Motor neuron (in vitro differentiated cells): ENCODE measurements at regions of chr3 and their contacts with region 1.

Region 1: GRCh38 chr3:27712136-27713077 is 9.7 kb downstream of the EOMES start:
- ATAC-seq: peak; percentile 86 to 97 (median 95)
- H3K4me3 ChIP-seq: peak overlapping the region; percentile 9 to 31 (median 18)
- H3K27ac ChIP-seq: no peak overlapping the region
- H3K4me1 ChIP-seq: peaks cover 16 to 22% of the 10 kb centered on the region in 2 donors

Region 2: GRCh38 chr3:27431116-27431515 is 281.3 kb before region 1 on chr3:
- in situ Hi-C with region 1: no loop called
- ATAC-seq: peak in 4 of 8 experiments; percentile 53 to 100 (median 100)
- H3K4me3 ChIP-seq: no peak overlapping the region
- H3K27ac ChIP-seq: no peak overlapping the region
- H3K4me1 ChIP-seq: no peaks in the 10 kb centered on the region

Region 3: GRCh38 chr3:28317438-28318022 is 605.1 kb after region 1 on chr3:
- in situ Hi-C with region 1: loop called in 4 of 9 experiments (anchors 25 kb)
- ATAC-seq: peak in 4 of 8 experiments; percentile 43 to 83 (median 79)
- H3K4me3 ChIP-seq: no peak overlapping the region
- H3K27ac ChIP-seq: no peak overlapping the region
- H3K4me1 ChIP-seq: no peaks in the 10 kb centered on the region

Region 4: DNA sequence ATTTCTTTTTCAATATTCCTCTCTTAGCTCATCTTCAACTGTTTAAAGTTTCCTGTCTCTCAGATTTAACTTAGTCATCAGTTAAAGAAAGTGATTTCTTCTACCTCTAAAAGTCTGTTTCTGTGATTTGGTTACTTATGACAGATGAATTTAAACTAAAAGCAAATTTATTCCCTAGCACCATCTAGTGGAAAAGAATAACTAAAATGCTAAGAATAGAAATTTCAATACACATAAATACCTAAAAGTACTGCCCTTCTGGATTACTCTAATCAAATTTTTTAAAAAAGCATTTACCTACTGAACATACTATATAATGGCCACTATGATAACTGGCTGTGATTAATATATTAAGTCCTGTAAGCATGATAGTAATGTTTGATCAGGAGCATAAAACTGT is 622.1 kb after region 1 on chr3:
- in situ Hi-C with region 1: loop called in 2 of 9 experiments (anchors 10 to 25 kb)
- ATAC-seq: no peak
- H3K4me3 ChIP-seq: no peak overlapping the region
- H3K27ac ChIP-seq: no peak overlapping the region
- H3K4me1 ChIP-seq: no peaks in the 10 kb centered on the region

Region 5: DNA sequence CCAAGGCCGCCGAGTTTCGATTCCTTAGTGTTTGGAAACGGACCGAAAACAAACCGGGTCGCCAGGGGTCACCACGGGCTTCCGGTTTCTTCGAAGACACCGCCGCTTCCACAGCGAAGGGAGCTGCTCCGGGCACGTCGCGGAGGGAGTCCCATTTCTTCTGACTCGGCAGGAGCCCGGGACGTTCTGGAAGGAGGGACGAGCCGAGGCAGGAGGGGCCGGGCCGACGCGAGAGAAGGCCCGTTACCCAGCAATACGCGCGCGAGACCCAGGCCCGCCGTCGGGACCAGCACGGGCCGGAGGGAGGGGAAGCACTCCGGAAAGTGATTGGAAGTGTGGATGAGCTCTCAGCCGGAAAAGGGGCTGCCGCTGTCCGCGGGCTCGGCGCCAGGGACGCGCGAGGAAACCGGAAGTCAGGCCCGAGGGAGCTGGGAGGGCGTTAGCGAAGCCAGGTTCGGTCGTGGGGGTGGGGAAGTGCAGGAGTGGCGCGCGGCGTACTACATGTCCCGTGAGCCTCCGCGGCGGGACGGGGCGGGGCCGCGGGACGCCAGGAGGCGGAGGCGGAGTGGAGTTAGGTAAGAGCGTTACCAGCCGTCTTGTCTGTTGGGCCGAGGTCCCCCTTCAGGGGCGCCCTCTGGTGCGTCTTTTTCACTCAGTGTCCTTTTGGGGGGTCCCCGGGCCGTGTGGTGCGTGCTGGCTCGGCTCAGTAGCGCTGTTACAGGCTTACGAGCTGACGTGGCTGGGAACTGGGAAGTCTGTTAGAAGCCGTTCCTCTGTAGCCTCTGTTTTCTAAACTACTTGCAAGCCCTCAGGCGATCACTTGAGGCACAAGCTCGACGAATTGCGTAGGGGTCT is 636.4 kb after region 1 on chr3 and contains the starts of genes AZI2 and ZCWPW2:
- in situ Hi-C with region 1: loop called in 1 of 9 experiments (anchors 25 kb)
- ATAC-seq: peak; percentile 76 to 92 (median 89)
- H3K4me3 ChIP-seq: peak within 1 kb of the TSS; percentile 72 to 84 (median 76)
- H3K27ac ChIP-seq: peak within 1 kb of the TSS; percentile 94 to 95
- H3K4me1 ChIP-seq: peaks cover 13 to 31% of the 10 kb centered on the region in 2 donors
- total RNA-seq, gene AZI2: 45.2 to 95.2 (median 72.3) TPM
- total RNA-seq, gene ZCWPW2: 0.21 to 2.1 (median 0.88) TPM